ENCODE measurements at regions of chr6 and their contacts with region 1.

Region 1: GRCh38 chr6:63643862-63644261 is 8.3 kb downstream of the PHF3 start:
- DNase-seq: no peak
- ATAC-seq: no peak
- H3K4me3 ChIP-seq: no peak overlapping the region
- H3K27ac ChIP-seq: peak overlapping the region; percentile 38
- H3K4me1 ChIP-seq: peaks cover 81% of the 10 kb centered on the region
- H3K27me3 ChIP-seq: no peaks in the 10 kb centered on the region
- CTCF ChIP-seq: no peak

Region 2: DNA sequence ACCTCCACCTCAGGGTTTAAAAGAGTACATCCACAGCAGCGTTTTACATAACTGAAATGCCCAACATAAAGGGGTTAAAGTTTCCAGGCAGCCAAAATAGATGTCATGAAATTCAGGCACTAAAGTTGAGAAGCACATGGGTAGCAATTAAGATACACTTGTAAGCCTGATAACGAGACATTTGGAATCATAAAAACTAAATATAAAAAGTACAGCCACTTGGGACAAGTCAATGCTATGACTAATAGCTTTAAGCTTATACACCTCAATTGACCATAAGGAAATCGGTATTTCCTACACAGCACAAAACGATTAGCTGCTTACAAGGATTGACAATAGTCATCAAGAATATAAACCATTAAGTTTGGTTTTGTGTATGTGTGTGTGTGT is 59.7 kb before region 1 on chr6:
- intact Hi-C with region 1: no loop called
- DNase-seq: no peak
- ATAC-seq: peak; percentile 42 to 66 (median 49)
- H3K4me3 ChIP-seq: no peak overlapping the region
- H3K27ac ChIP-seq: peak overlapping the region; percentile 3
- H3K4me1 ChIP-seq: no peaks in the 10 kb centered on the region
- H3K27me3 ChIP-seq: no peaks in the 10 kb centered on the region
- CTCF ChIP-seq: no peak

Region 3: GRCh38 chr6:63677282-63677681 is 33.4 kb after region 1 on chr6:
- intact Hi-C with region 1: loop called in 1 of 2 experiments (anchors 5 kb)
- DNase-seq: no peak
- ATAC-seq: peak in 1 of 4 donors; percentile 39
- H3K4me3 ChIP-seq: no peak overlapping the region
- H3K27ac ChIP-seq: peak overlapping the region; percentile 11
- H3K4me1 ChIP-seq: peaks cover 44% of the 10 kb centered on the region
- H3K27me3 ChIP-seq: no peaks in the 10 kb centered on the region
- CTCF ChIP-seq: no peak

Region 4: DNA sequence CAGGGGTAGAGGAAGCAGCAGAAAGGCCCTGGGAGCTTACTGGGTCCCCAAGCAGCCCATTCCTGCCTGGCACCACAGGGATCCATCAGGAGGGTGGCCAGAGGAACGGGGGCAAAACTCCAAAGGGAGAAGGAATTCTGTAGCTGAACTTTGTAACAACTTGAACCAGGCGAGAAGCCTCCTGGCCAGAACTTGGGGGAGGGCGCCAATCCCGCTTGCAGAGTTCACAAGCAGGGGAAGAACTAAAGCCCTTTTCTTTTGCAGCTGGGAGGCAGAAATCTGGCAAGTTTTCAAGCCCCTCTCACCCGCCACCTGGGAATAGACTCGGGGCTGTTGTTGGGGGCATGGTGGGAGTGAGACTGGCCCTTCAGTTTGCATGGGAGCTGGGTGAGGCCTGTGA is 180.9 kb after region 1 on chr6:
- intact Hi-C with region 1: no loop called
- DNase-seq: peak in 1 of 2 donors; percentile 46
- ATAC-seq: no peak
- H3K4me3 ChIP-seq: no peak overlapping the region
- H3K27ac ChIP-seq: no peak overlapping the region
- H3K4me1 ChIP-seq: no peaks in the 10 kb centered on the region
- H3K27me3 ChIP-seq: no peaks in the 10 kb centered on the region
- CTCF ChIP-seq: no peak

Region 5: DNA sequence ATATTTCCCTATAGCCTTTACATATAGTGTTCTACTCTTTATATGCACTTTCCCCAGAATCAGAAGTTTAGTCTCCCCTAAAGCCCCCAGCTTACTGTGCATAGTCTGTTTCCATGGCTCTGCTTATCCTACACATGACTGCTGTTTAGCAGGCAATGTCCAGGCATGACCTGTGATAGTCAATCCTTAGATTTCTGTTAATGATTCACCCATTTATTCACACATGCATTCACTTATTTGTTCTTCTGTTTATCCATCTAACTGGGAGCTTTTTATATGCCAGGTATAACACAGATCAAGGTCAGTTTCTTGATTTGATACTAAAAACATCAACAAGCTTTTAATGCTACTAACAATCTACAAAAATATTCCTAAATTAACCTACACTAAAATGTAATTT is 292.5 kb after region 1 on chr6:
- intact Hi-C with region 1: no loop called
- DNase-seq: no peak
- ATAC-seq: no peak
- H3K4me3 ChIP-seq: no peak overlapping the region
- H3K27ac ChIP-seq: no peak overlapping the region
- H3K4me1 ChIP-seq: no peaks in the 10 kb centered on the region
- H3K27me3 ChIP-seq: no peaks in the 10 kb centered on the region
- CTCF ChIP-seq: no peak

Measured in psoas muscle (tissue), 8 donors.